ENCODE measurements at regions of chr5 and their contacts with region 1.

Region 1: GRCh38 chr5:77491783-77492652 is at the start of gene WDR41:
- DNase-seq: peak; percentile 82
- ATAC-seq: peak; percentile 96 to 97
- H3K4me3 ChIP-seq: peak within 1 kb of the TSS; percentile 73 to 82 (median 79)
- H3K27ac ChIP-seq: peak within 1 kb of the TSS; percentile 87 to 94 (median 89)
- H3K4me1 ChIP-seq: peaks cover 0 to 4% of the 10 kb centered on the region in 2 donors
- H3K27me3 ChIP-seq: no peaks in the 10 kb centered on the region
- CTCF ChIP-seq: peak; percentile 86 to 98 (median 94)
- POLR2A ChIP-seq: peak; percentile 58 to 61
- total RNA-seq, gene WDR41: 16.3 to 30.6 (median 19.2) TPM

Region 2: GRCh38 chr5:77030097-77031071 is 461.6 kb before region 1 on chr5 and contains the start of gene AGGF1:
- in situ Hi-C with region 1: no loop called
- intact Hi-C with region 1: loop called (anchors 2 kb)
- DNase-seq: peak; percentile 82 to 88
- ATAC-seq: peak; percentile 99
- H3K4me3 ChIP-seq: peak within 1 kb of the TSS; percentile 72 to 95 (median 89)
- H3K27ac ChIP-seq: peak within 1 kb of the TSS; percentile 81 to 90 (median 88)
- H3K4me1 ChIP-seq: peaks cover 16 to 21% of the 10 kb centered on the region in 2 donors
- H3K27me3 ChIP-seq: no peaks in the 10 kb centered on the region
- CTCF ChIP-seq: no peak
- POLR2A ChIP-seq: peak; percentile 31 to 66
- total RNA-seq, gene AGGF1: 16.9 to 25.0 (median 19.8) TPM

Region 3: DNA sequence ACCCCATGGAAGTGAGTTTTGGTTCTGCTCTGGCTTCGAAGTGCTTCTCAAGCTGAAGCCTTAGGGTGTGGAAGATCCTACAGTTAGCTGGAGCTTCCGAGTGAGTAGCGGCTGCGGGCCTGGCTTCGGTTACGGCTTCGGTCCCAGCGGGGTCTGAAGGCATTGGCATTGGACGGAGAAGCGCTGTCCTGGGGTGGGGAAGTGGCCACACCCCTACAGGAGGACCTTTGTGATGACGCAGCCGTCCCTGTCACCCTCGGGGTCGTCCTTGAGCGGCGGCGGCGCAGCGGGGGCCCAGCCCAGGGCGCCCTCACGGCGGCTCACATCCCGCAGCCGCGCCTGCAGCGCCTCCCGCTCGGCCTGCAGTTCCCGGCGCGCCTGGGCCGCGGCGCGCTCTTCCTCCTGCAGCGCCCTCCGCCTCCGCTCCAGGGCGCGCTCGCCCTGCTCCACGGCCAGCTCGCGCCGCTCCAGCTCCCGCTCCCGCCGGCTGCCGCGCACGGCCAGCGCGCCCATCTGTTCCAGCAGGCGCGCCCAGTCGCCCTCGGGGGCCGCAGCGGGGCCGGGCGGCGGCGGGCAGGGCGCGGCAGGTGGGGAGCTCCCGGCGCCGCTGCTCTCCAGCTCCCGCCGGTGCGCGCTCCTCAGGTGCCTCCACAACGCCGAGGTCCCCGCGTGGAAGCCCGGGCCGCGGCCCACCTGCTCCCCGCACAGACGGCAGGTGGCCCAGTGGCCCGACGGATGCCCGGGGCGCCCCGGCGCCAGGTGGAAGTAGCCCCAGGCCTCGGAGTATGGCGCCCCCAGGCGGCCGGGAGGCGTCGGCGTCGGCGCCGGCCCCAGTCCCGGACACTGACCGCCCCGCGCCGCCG is 414.8 kb before region 1 on chr5:
- in situ Hi-C with region 1: no loop called
- intact Hi-C with region 1: loop called (anchors 2 kb)
- DNase-seq: peak in 1 of 2 donors; percentile 38
- ATAC-seq: peak; percentile 71 to 83
- H3K4me3 ChIP-seq: peak overlapping the region; percentile 43 to 55 (median 50)
- H3K27ac ChIP-seq: peak overlapping the region in 3 of 4 donors; percentile 11 to 57 (median 48)
- H3K4me1 ChIP-seq: peaks cover 3 to 4% of the 10 kb centered on the region in 2 donors
- H3K27me3 ChIP-seq: no peaks in the 10 kb centered on the region
- CTCF ChIP-seq: peak in 4 of 5 experiments; percentile 46 to 81 (median 68)
- POLR2A ChIP-seq: no peak

Region 4: DNA sequence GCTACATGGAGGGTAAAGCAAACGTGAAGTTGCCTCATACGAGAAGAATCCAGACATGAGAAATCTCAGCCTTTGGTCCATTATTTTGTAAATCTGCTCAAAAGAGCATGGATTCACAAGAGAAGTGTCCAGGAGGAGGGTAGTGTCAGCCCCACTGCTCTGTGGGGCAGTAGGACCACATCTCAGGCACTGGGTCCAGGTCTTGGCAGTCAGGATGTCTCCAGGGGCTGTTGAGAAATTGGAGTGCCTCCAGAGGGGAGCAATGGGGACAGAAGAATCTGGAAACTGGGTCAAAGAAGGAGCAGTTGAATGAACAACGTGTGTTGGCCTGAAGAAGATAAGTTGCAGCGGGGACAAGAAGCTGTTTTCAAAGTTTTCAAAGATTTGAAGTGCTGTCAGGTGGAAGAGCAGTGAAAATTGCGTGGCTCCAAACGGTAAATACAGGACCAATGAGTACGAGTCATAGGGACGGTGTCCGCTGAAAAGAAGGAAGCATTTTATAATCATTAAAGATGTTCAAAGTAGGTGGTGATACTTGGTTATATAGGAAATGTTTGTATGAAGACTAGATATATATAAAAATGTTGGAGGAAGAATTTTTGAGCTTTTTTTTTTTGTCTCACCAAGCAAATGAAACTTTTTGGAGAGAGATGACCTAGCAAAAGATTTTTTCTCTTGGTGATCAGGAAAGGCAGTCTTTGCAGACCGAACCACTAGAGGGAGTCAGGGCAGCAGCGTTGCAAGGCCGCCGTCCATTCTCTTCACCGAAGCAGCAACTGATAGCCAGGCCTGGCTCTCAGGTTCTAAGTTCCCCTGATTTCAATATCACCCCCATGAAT is 347.8 kb before region 1 on chr5:
- in situ Hi-C with region 1: loop called in 2 of 4 experiments (anchors 10 to 25 kb)
- intact Hi-C with region 1: loop called (anchors 1 kb)
- DNase-seq: peak; percentile 36 to 51
- ATAC-seq: peak; percentile 74 to 81
- H3K4me3 ChIP-seq: no peak overlapping the region
- H3K27ac ChIP-seq: no peak overlapping the region
- H3K4me1 ChIP-seq: no peaks in the 10 kb centered on the region
- H3K27me3 ChIP-seq: no peaks in the 10 kb centered on the region
- CTCF ChIP-seq: peak; percentile 36 to 79 (median 51)
- POLR2A ChIP-seq: no peak

Region 5: DNA sequence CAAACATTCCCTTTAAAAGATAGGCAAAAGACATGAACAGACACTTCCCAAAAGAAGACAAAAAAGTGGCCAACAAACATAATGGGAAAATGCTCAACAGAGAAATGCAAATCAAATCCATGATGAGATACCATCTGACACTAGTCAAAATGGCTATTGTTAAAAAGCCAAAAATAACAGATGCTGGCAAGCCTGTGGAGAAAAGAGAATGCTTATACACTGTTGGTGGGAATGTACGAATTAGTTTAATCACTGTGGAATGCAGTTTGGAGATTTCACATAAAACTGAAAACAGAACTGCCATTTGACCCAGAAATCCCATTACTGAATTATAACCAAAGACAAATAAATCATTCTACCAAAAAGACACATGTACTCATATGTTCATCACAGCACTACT is 58.4 kb after region 1 on chr5:
- in situ Hi-C with region 1: no loop called
- intact Hi-C with region 1: no loop called
- DNase-seq: no peak
- ATAC-seq: no peak
- H3K4me3 ChIP-seq: no peak overlapping the region
- H3K27ac ChIP-seq: no peak overlapping the region
- H3K4me1 ChIP-seq: no peaks in the 10 kb centered on the region
- H3K27me3 ChIP-seq: no peaks in the 10 kb centered on the region
- CTCF ChIP-seq: no peak
- POLR2A ChIP-seq: no peak

Region 6: GRCh38 chr5:77775790-77776553 is 284.0 kb after region 1 on chr5 and contains the start of gene TBCA:
- in situ Hi-C with region 1: no loop called
- intact Hi-C with region 1: loop called (anchors 5 kb)
- DNase-seq: peak; percentile 63 to 81
- ATAC-seq: peak; percentile 90 to 91
- H3K4me3 ChIP-seq: peak within 1 kb of the TSS; percentile 68 to 96 (median 86)
- H3K27ac ChIP-seq: peak within 1 kb of the TSS; percentile 86 to 99 (median 98)
- H3K4me1 ChIP-seq: peaks cover 42 to 43% of the 10 kb centered on the region in 2 donors
- H3K27me3 ChIP-seq: no peaks in the 10 kb centered on the region
- CTCF ChIP-seq: peak; percentile 4 to 44 (median 18)
- POLR2A ChIP-seq: peak; percentile 93 to 95
- total RNA-seq, gene TBCA: 63.7 to 106 (median 88.1) TPM

Measured in gastrocnemius medialis (tissue), 4 donors.